Activated T-helper 2 cell treated with anti-CD3 and anti-CD28 coated beads, Interferon-gamma antibody, Interleukin-2, Interleukin-4, amounts not matched to agents 10 μg/mL and 5 μg/mL and 100 μg/mL, durations not matched to agents 14 hours and 24 hours and 36 hours (primary cell): ENCODE measurements at regions of chr12 and their contacts with region 1.

Region 1: DNA sequence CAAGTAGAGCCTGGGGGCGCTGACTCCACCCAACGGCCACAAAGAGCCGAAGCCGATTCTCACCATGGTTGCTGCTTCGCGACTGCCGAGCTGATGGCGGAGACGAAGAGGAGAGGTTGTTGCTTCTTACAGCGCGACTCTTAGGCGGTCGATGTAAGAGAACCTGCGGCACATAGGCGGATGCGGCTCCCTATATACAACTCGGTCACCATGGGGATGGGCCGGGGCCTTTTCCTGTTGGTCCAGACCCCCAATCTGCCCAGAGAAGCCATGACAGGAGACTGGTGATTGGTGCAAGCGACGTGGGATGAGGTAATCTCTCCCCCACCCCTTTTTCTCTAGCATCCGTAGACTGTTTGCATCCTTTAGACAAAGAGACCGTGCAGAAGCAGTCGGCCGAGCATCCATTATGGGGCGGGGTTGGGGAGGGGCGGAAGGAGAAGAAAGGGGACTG is at the start of gene TUBA1A:
- DNase-seq: peak; percentile 96
- H3K4me3 Mint-ChIP-seq: peak within 1 kb of the TSS; percentile 92
- H3K27ac Mint-ChIP-seq: peak within 1 kb of the TSS; percentile 97
- H3K4me1 Mint-ChIP-seq: peaks cover 12% of the 10 kb centered on the region
- H3K27me3 Mint-ChIP-seq: peaks cover 7% of the 10 kb centered on the region
- total RNA-seq, gene TUBA1A: 86.9 and 94.0 TPM in 2 replicates

Region 2: GRCh38 chr12:49060237-49061156 is 128.4 kb before region 1 on chr12 and contains the start of gene KMT2D:
- intact Hi-C with region 1: loop called (anchors 5 kb)
- DNase-seq: peak; percentile 89
- H3K4me3 Mint-ChIP-seq: peak within 1 kb of the TSS; percentile 92
- H3K27ac Mint-ChIP-seq: peak within 1 kb of the TSS; percentile 89
- H3K4me1 Mint-ChIP-seq: peaks cover 43% of the 10 kb centered on the region
- H3K27me3 Mint-ChIP-seq: no peaks in the 10 kb centered on the region
- total RNA-seq, gene KMT2D: 93.3 and 100 TPM in 2 replicates

Region 3: GRCh38 chr12:49088190-49088931 is 100.6 kb before region 1 on chr12:
- intact Hi-C with region 1: no loop called
- DNase-seq: peak; percentile 62
- H3K4me3 Mint-ChIP-seq: peak overlapping the region; percentile 8
- H3K27ac Mint-ChIP-seq: no peak overlapping the region
- H3K4me1 Mint-ChIP-seq: peaks cover 38% of the 10 kb centered on the region
- H3K27me3 Mint-ChIP-seq: peaks cover 44% of the 10 kb centered on the region

Region 4: DNA sequence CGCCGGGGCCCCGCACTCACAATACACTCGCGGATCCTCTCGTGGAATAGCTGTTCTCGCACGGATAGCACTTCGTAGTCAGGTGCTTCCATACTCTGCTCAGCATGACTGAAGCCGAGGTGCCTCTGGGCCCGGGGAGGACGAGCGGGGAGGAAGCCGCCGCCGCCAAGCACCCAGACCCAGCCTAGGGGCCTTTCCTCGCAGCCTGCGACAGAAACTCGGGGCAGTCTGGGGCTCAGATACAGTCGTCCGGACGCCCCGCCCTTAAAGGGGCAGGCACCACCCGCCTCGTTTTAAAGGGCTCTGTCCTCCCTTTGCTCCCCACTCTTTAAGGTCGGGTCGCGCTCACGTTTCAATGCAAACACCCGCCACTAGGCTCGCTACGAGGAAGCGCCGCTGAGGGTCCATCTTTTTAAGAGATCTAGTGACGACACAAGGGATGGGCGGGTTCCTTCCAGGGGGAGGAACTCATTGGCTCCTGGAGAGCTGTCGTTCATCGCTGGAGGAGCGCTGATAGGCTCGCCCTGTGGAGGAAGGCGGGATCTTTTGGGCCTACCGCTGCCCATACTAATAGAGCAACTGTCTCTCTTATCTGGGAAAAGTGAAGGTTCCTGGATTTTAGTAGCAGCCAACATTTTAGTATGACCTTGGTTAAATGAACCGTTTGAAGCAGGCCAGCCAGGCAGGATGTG is 78.3 kb before region 1 on chr12 and contains the start of gene LMBR1L:
- intact Hi-C with region 1: loop called (anchors 5 kb)
- DNase-seq: peak; percentile 94
- H3K4me3 Mint-ChIP-seq: peak within 1 kb of the TSS; percentile 97
- H3K27ac Mint-ChIP-seq: peak within 1 kb of the TSS; percentile 91
- H3K4me1 Mint-ChIP-seq: peaks cover 22% of the 10 kb centered on the region
- H3K27me3 Mint-ChIP-seq: peaks cover 2% of the 10 kb centered on the region
- total RNA-seq, gene LMBR1L: 47.1 and 53.5 TPM in 2 replicates

Region 5: DNA sequence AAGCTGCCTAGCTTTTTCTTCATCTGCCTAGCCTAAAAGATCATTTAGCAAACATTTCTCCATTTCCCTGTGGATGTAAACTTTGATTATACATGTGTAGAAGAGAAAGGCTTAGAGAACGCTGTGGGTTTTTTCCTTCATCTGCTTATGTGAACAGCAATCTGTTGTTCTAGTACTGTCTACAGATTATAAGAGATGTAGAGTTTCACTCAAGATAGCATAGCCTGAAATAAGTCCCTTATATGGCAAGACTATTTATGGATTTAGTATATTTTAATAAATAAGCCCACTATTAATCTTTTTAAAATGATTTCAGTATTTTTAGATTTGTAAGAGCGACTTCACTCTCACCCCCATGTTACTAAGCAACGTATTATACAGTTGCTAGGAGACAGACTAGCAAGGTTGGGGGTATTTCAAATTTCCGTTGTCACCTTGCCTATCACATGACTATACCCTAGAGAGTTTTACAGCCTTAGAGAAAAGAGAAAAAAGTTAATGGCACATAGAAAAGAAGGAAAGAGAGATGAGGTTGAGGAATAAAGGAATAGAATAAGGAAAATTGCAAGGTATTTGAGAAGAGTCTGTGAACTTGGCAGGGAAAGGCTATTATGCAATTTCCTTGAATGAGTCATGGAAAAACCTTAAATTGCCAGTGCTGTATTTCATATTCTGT is 12.1 kb after region 1 on chr12:
- intact Hi-C with region 1: loop called (anchors 1 kb)
- DNase-seq: no peak
- H3K4me3 Mint-ChIP-seq: no peak overlapping the region
- H3K27ac Mint-ChIP-seq: peak overlapping the region; percentile 24
- H3K4me1 Mint-ChIP-seq: peaks cover 15% of the 10 kb centered on the region
- H3K27me3 Mint-ChIP-seq: peaks cover 11% of the 10 kb centered on the region

Region 6: GRCh38 chr12:49220972-49221371 is 32.0 kb after region 1 on chr12:
- intact Hi-C with region 1: no loop called
- DNase-seq: no peak
- H3K4me3 Mint-ChIP-seq: no peak overlapping the region
- H3K27ac Mint-ChIP-seq: no peak overlapping the region
- H3K4me1 Mint-ChIP-seq: no peaks in the 10 kb centered on the region
- H3K27me3 Mint-ChIP-seq: peaks cover 1% of the 10 kb centered on the region

Region 7: DNA sequence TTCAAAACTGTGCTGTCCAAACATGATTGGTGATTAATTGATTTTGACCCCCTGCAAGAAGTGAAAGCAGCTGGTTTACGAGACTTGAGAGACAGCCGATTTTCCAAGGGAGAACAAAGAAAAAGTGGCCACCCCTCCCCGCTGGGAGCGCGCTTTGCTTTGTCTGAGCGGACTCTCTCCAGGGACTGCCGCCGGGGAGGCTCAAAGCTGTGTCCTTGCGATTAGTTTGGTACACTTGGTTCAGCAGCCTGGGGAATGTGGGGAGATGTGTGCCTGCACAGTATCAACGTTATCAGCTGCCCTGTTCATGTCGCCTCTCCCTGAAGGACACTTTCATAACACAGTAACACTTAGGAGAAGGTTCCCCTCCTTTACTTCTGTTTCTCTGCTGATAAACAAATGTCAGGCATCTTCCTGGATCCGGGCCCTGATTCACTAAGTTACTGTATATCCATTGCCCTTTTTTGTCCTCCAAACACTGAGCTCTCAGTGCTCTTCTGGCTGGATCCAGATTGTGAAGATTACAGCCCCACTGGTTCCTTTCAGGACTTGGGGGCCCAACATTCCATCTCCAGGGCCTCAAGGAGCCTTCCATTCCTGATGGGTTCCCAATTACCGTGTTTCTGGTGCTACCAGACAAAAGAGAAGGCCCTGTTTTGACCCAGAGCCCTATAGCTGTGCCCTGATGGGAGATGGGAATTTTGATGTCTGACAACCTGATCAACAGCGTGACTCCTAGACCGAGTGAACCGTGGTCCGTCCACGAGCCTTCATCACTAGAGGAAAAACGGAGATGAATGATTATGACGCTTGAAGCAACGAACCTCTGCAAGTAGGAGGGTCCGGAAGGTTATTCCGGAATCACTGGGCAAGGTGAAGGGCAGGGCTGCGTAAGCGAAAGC is 44.2 kb after region 1 on chr12:
- intact Hi-C with region 1: loop called (anchors 1 kb)
- DNase-seq: no peak
- H3K4me3 Mint-ChIP-seq: peak overlapping the region; percentile 37
- H3K27ac Mint-ChIP-seq: peak overlapping the region; percentile 73
- H3K4me1 Mint-ChIP-seq: peaks cover 16% of the 10 kb centered on the region
- H3K27me3 Mint-ChIP-seq: peaks cover 8% of the 10 kb centered on the region

Region 8: GRCh38 chr12:49264738-49265515 is 76.0 kb after region 1 on chr12 and contains the start of gene TUBA1C:
- intact Hi-C with region 1: loop called (anchors 2 kb)
- DNase-seq: peak; percentile 92
- H3K4me3 Mint-ChIP-seq: peak within 1 kb of the TSS; percentile 100
- H3K27ac Mint-ChIP-seq: peak within 1 kb of the TSS; percentile 98
- H3K4me1 Mint-ChIP-seq: peaks cover 41% of the 10 kb centered on the region
- H3K27me3 Mint-ChIP-seq: no peaks in the 10 kb centered on the region
- total RNA-seq, gene TUBA1C: 349 and 355 TPM in 2 replicates

Region 9: DNA sequence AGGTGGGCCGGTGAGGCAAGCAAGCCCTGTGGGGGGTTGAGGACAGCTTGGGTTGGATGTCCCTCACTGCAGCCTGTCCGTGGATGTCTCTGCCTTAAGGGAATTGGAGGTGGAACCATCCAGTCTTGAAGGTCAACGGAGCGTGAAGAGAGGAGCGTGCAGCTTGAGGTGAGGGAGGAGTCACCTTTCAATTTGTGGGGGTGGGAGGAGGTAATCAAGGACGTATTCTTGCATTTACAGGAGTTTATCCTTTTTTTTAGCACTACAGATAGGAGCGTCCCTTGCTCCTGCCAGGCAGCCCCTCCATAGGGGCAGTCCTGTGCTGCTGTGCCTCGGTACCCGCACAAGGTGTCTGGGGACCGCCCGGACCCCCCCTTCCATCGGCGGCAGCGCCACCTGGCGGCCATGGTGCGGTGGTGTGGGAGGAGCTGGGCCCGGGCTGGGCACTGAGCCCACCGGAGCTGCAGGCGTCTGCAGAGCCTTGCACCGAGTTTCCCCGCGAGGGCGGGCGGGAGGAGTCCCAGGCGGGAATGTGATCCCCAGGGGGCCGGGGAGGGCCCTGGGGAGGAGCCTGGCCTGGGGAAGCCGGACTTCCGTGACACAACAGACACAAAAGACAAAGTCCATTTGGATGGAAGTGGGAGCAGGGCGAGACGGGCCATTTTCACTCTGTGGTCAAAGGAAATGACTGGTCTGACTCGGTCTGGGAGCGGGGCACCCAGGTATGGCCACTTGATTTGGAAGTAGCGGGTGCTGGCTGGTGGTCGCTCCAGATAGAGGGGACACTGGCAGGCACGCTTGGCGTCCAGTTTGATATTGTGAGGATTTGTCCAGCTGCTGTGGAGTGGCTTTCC is 158.7 kb after region 1 on chr12:
- intact Hi-C with region 1: no loop called
- DNase-seq: peak; percentile 72
- H3K4me3 Mint-ChIP-seq: peak overlapping the region; percentile 67
- H3K27ac Mint-ChIP-seq: no peak overlapping the region
- H3K4me1 Mint-ChIP-seq: peaks cover 18% of the 10 kb centered on the region
- H3K27me3 Mint-ChIP-seq: peaks cover 63% of the 10 kb centered on the region